ENCODE measurements at regions of chr6 and their contacts with region 1.

Region 1: GRCh38 chr6:6547110-6547879 is 41.2 kb upstream of the LY86 start:
- DNase-seq: peak; percentile 42 to 83
- H3K4me3 ChIP-seq: peak overlapping the region; percentile 0; the same call in 1 of the 2 replicates
- H3K27ac ChIP-seq: no peak overlapping the region
- H3K4me1 ChIP-seq: no peaks in the 10 kb centered on the region
- H3K27me3 ChIP-seq: peaks cover 13% of the 10 kb centered on the region
- CTCF ChIP-seq: peak; percentile 88

Region 2: GRCh38 chr6:5220443-5220842 is 1326.9 kb before region 1 on chr6:
- CTCF ChIA-PET with region 1: no interaction called
- POLR2A ChIA-PET with region 1: no interaction called
- intact Hi-C with region 1: loop called (anchors 10 kb)
- DNase-seq: no peak
- H3K4me3 ChIP-seq: no peak overlapping the region
- H3K27ac ChIP-seq: no peak overlapping the region
- H3K4me1 ChIP-seq: no peaks in the 10 kb centered on the region
- H3K27me3 ChIP-seq: no peaks in the 10 kb centered on the region
- CTCF ChIP-seq: no peak

Region 3: GRCh38 chr6:5401845-5402738 is 1145.2 kb before region 1 on chr6:
- CTCF ChIA-PET with region 1: interaction called, 3 read pairs
- POLR2A ChIA-PET with region 1: no interaction called
- intact Hi-C with region 1: loop called (anchors 5 kb)
- DNase-seq: no peak
- H3K4me3 ChIP-seq: no peak overlapping the region
- H3K27ac ChIP-seq: no peak overlapping the region
- H3K4me1 ChIP-seq: no peaks in the 10 kb centered on the region
- H3K27me3 ChIP-seq: no peaks in the 10 kb centered on the region
- CTCF ChIP-seq: peak; percentile 66

Region 4: DNA sequence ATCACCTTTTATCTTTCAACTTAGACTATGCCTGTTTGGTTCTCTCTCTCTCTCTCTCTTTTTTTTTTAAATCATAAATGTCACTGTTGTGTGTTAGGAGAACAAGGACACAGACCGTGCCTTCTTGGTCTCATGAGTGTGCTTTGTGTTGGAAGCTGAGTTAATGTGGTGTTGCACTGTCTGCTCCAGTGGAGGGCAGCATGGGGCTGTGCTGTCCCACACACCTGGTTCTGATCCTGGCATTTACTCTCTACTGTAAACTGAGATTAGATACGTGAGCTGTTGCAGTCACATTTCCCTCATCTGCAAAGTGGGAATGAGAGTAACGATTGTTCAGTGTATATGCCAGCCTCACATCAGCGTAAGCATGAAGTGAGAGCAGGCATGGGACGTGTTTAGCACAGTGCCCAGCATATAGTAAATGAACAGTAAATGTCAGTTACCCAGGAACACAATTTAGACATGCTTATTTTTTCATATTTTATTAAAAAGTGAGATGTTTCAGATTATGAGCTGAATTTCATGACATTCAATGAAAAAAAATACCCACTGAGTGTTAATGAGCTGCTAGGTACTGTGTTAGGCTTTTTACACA is 1124.9 kb before region 1 on chr6:
- CTCF ChIA-PET with region 1: interaction called, 3 read pairs
- POLR2A ChIA-PET with region 1: no interaction called
- intact Hi-C with region 1: loop called (anchors 1 kb)
- DNase-seq: peak in 1 of 2 experiments; percentile 21
- H3K4me3 ChIP-seq: no peak overlapping the region
- H3K27ac ChIP-seq: no peak overlapping the region
- H3K4me1 ChIP-seq: no peaks in the 10 kb centered on the region
- H3K27me3 ChIP-seq: no peaks in the 10 kb centered on the region
- CTCF ChIP-seq: peak; percentile 46

Region 5: DNA sequence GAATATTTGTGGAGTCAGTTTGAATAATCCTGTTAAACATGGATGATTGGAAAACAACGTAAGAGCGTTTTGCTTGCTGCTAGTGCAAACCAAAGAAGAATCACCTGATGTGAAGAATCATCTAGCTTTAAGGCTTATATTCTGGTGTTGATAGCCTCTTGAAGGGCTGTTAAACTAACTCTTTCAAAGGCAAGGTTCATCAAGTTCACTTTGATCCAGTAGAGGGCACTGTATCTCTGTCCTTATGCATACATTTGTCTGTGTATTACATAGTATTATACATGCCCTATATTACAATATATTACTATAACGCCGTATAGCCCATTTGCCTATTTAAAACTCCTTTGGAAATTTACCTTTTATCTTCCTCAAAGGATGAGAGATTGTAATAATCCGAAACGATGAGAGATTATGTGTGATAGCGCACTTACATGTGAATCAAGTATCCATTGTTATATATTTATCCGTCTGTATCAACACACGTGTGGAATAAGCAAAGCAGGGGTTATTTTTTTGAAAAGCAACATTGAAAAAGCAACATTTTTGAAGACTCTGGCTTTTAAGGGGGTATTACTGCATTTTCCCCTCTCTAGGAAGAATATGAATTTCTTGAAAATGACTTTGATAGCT is 489.8 kb before region 1 on chr6:
- CTCF ChIA-PET with region 1: no interaction called
- POLR2A ChIA-PET with region 1: no interaction called
- intact Hi-C with region 1: loop called (anchors 1 kb)
- DNase-seq: no peak
- H3K4me3 ChIP-seq: no peak overlapping the region
- H3K27ac ChIP-seq: no peak overlapping the region
- H3K4me1 ChIP-seq: no peaks in the 10 kb centered on the region
- H3K27me3 ChIP-seq: peaks cover 26% of the 10 kb centered on the region; the same call in 1 of the 2 replicates
- CTCF ChIP-seq: peak; percentile 63